ENCODE measurements at regions of chr1 and their contacts with region 1.

Region 1: DNA sequence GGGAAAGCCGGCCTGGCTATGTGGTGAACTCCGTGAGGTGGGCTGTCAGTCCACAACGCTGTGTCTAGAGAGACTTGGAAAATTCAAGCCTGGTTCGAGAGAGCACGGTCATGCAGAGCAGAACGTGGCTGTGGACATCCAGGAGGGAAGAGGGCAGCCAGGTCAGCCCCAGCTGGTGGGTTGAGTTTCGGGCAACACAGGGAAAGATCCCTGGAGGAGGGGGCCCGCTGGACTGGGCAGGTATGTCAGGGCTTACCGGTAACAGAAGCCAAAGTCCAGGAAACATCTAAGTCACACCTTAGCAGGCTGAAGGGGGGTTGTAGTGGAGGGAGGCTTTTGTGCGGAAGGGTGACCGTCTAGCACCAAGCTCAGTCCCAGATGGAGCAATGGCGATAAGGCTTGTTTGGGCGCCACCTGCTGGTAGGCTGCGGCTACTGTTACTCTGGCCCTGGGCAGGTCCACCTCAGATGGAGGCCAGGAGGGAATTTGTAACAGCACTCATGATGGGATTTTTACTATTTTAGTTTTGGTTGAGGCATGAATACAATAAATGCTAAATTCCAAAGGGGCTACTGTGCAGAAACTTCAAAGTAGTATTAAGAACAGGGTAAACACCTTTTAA is 143.3 kb upstream of the ZNF644 start:
- DNase-seq: peak; percentile 73
- ATAC-seq: peak; percentile 82
- H3K4me3 ChIP-seq: no peak overlapping the region
- H3K4me3 Mint-ChIP-seq: no peak overlapping the region
- H3K27ac ChIP-seq: no peak overlapping the region
- H3K27ac Mint-ChIP-seq: no peak overlapping the region
- H3K4me1 ChIP-seq: peaks cover 0 to 4% of the 10 kb centered on the region in 2 donors
- H3K4me1 Mint-ChIP-seq: peaks cover 2% of the 10 kb centered on the region
- H3K27me3 ChIP-seq: no peaks in the 10 kb centered on the region
- H3K27me3 Mint-ChIP-seq: peaks cover 3% of the 10 kb centered on the region
- CTCF ChIP-seq: peak; percentile 95

Region 2: DNA sequence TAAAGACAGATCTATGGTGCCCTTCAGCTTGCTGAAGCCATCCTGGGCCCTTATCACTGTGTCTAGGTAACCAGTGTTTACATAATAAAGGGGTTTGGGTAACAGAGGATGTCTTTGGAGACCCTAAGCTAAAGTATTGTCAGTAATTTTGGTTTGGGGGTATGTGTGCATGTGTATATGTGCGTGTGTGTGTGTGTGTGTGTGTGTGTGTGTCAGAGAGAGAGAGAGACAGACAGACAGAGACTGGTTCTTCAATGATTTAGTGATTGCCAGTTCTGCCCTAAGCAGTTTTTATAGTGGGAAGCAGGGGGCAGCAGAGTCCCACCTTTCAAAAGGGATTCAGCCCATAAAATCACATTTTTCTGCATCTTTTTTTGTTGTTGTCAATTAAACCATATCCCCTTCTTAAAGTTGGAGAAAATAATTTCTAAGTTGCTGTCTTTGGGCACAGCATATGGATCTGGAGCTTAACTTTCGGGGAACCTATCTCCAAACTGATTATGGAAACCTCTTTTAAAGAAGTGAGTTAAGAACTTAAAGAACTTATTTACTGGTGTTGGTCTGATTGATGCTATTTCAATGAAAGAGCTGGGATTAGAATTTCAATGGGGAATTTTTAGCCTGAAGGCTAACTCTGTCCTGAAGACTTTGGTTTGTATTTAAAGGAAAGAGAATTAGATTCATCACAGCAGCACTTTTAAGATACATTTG is 1119.1 kb before region 1 on chr1:
- CTCF ChIA-PET with region 1: interaction called, 8 read pairs
- POLR2A ChIA-PET with region 1: no interaction called
- intact Hi-C with region 1: loop called (anchors 5 kb)
- DNase-seq: peak; percentile 10
- ATAC-seq: no peak
- H3K4me3 ChIP-seq: no peak overlapping the region
- H3K4me3 Mint-ChIP-seq: no peak overlapping the region
- H3K27ac ChIP-seq: no peak overlapping the region
- H3K27ac Mint-ChIP-seq: no peak overlapping the region
- H3K4me1 ChIP-seq: no peaks in the 10 kb centered on the region
- H3K4me1 Mint-ChIP-seq: no peaks in the 10 kb centered on the region
- H3K27me3 ChIP-seq: no peaks in the 10 kb centered on the region
- H3K27me3 Mint-ChIP-seq: peaks cover 9% of the 10 kb centered on the region
- CTCF ChIP-seq: peak; percentile 66

Region 3: GRCh38 chr1:90721210-90722194 is 443.6 kb before region 1 on chr1:
- CTCF ChIA-PET with region 1: interaction called, 21 read pairs
- POLR2A ChIA-PET with region 1: no interaction called
- intact Hi-C with region 1: loop called (anchors 1 kb)
- DNase-seq: peak; percentile 67
- ATAC-seq: no peak
- H3K4me3 ChIP-seq: no peak overlapping the region
- H3K4me3 Mint-ChIP-seq: no peak overlapping the region
- H3K27ac ChIP-seq: no peak overlapping the region
- H3K27ac Mint-ChIP-seq: no peak overlapping the region
- H3K4me1 ChIP-seq: peaks cover 48 to 68% of the 10 kb centered on the region in 2 donors
- H3K4me1 Mint-ChIP-seq: peaks cover 37% of the 10 kb centered on the region
- H3K27me3 ChIP-seq: peaks cover 0 to 93% (median 82%) of the 10 kb centered on the region in 4 experiments
- H3K27me3 Mint-ChIP-seq: peaks cover 79% of the 10 kb centered on the region
- CTCF ChIP-seq: peak; percentile 77

Region 4: DNA sequence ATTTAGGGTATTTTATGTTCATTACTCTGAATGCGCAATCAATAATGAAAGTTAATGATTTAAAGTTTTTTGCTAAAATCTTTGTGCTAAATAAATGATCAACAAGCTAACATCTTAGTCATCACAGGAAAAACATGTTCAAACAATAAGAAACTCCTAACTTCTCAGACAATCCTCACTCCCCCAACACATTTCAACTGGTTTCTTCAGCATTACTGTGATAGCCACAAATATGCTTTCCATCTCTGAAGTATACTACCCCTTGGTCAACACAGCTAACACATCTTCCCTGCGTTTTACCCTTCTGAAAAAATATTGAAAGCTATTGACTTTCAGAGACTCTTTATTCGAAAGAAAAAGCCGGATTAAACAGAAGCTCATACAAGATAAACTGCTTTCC is 229.1 kb before region 1 on chr1:
- CTCF ChIA-PET with region 1: interaction called, 10 read pairs
- POLR2A ChIA-PET with region 1: no interaction called
- intact Hi-C with region 1: no loop called
- DNase-seq: no peak
- ATAC-seq: no peak
- H3K4me3 ChIP-seq: no peak overlapping the region
- H3K4me3 Mint-ChIP-seq: no peak overlapping the region
- H3K27ac ChIP-seq: no peak overlapping the region
- H3K27ac Mint-ChIP-seq: no peak overlapping the region
- H3K4me1 ChIP-seq: no peaks in the 10 kb centered on the region
- H3K4me1 Mint-ChIP-seq: peaks cover 14% of the 10 kb centered on the region
- H3K27me3 ChIP-seq: no peaks in the 10 kb centered on the region
- H3K27me3 Mint-ChIP-seq: no peaks in the 10 kb centered on the region
- CTCF ChIP-seq: no peak

Region 5: DNA sequence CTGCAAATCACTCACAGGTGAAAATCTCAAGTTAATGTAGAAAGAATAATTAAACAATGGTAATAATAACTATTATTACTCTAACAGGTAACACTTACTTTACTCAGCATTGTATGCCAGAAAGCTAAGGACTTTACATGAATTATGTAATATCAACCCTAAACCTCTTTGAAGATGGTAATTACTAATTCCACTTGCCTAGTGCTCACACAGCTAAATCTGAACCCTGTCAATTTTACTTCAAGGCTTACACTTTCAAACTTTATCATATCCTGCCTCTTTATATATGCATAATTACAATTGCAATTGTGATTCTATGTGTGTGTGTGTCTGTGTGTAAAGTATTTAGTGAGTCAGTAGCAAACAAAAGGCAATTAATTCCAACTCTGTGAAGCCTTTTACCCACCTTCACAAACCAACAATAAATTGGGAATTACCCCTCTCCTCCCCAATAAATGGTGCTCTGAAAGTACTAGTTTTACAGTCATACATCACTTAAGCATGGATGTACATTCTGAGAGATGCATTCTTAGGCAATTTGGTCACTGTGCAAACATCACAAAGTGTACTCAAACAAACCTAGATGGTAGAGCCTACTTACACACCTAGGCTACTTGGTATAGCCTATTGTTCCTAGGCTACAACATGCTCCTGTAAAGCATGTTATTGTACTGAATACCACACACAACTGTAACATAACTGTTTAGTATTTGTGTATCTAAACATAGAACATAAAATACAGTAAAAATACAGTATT is 149.2 kb before region 1 on chr1:
- CTCF ChIA-PET with region 1: interaction called, 73 read pairs
- POLR2A ChIA-PET with region 1: no interaction called
- intact Hi-C with region 1: loop called (anchors 1 kb)
- DNase-seq: no peak
- ATAC-seq: no peak
- H3K4me3 ChIP-seq: no peak overlapping the region
- H3K4me3 Mint-ChIP-seq: peak overlapping the region; percentile 44
- H3K27ac ChIP-seq: peak overlapping the region in 1 of 2 donors; percentile 47
- H3K27ac Mint-ChIP-seq: no peak overlapping the region
- H3K4me1 ChIP-seq: peaks cover 43 to 67% of the 10 kb centered on the region in 2 donors
- H3K4me1 Mint-ChIP-seq: peaks cover 80% of the 10 kb centered on the region
- H3K27me3 ChIP-seq: no peaks in the 10 kb centered on the region
- H3K27me3 Mint-ChIP-seq: no peaks in the 10 kb centered on the region
- CTCF ChIP-seq: no peak

Region 6: GRCh38 chr1:91054780-91055481 is 110.2 kb before region 1 on chr1:
- CTCF ChIA-PET with region 1: interaction called, 13 read pairs
- POLR2A ChIA-PET with region 1: no interaction called
- intact Hi-C with region 1: no loop called
- DNase-seq: peak; percentile 69
- ATAC-seq: peak; percentile 87
- H3K4me3 ChIP-seq: peak overlapping the region in 1 of 5 experiments; percentile 34
- H3K4me3 Mint-ChIP-seq: no peak overlapping the region
- H3K27ac ChIP-seq: peak overlapping the region; percentile 48 to 73
- H3K27ac Mint-ChIP-seq: no peak overlapping the region
- H3K4me1 ChIP-seq: peaks cover 50 to 62% of the 10 kb centered on the region in 2 donors
- H3K4me1 Mint-ChIP-seq: peaks cover 9% of the 10 kb centered on the region
- H3K27me3 ChIP-seq: no peaks in the 10 kb centered on the region
- H3K27me3 Mint-ChIP-seq: no peaks in the 10 kb centered on the region
- CTCF ChIP-seq: no peak

Region 7: GRCh38 chr1:91099746-91100621 is 65.2 kb before region 1 on chr1:
- CTCF ChIA-PET with region 1: no interaction called
- POLR2A ChIA-PET with region 1: no interaction called
- intact Hi-C with region 1: no loop called
- DNase-seq: no peak
- ATAC-seq: no peak
- H3K4me3 ChIP-seq: no peak overlapping the region
- H3K4me3 Mint-ChIP-seq: no peak overlapping the region
- H3K27ac ChIP-seq: no peak overlapping the region
- H3K27ac Mint-ChIP-seq: no peak overlapping the region
- H3K4me1 ChIP-seq: peaks cover 0 to 4% of the 10 kb centered on the region in 2 donors
- H3K4me1 Mint-ChIP-seq: peaks cover 5% of the 10 kb centered on the region
- H3K27me3 ChIP-seq: peaks cover 0 to 9% (median 1%) of the 10 kb centered on the region in 4 experiments
- H3K27me3 Mint-ChIP-seq: peaks cover 17% of the 10 kb centered on the region
- CTCF ChIP-seq: no peak

Region 8: GRCh38 chr1:91273875-91274274 is 108.7 kb after region 1 on chr1:
- CTCF ChIA-PET with region 1: no interaction called
- POLR2A ChIA-PET with region 1: no interaction called
- intact Hi-C with region 1: no loop called
- DNase-seq: no peak
- ATAC-seq: no peak
- H3K4me3 ChIP-seq: no peak overlapping the region
- H3K4me3 Mint-ChIP-seq: no peak overlapping the region
- H3K27ac ChIP-seq: no peak overlapping the region
- H3K27ac Mint-ChIP-seq: no peak overlapping the region
- H3K4me1 ChIP-seq: no peaks in the 10 kb centered on the region
- H3K4me1 Mint-ChIP-seq: no peaks in the 10 kb centered on the region
- H3K27me3 ChIP-seq: no peaks in the 10 kb centered on the region
- H3K27me3 Mint-ChIP-seq: peaks cover 2% of the 10 kb centered on the region
- CTCF ChIP-seq: no peak

Region 9: DNA sequence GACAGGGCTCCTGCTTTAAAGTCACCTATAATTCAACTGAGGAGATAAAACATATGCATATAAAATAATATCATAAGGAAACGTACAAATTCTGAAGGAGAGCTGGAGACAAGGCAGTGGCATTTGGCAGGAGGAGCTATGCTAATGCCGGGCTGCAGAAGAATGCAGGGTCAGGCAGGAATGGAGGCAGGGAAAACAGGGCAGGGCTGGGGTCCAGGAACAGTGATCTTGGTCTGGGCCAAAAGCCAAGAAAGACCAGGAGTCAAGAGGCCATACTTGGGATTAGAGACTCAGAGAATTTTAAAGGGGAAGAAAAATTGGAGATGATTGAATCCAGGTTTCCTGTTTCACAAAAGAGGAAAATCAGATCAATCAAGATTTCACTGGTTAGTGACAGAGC is 764.1 kb after region 1 on chr1:
- CTCF ChIA-PET with region 1: interaction called, 24 read pairs
- POLR2A ChIA-PET with region 1: no interaction called
- intact Hi-C with region 1: no loop called
- DNase-seq: no peak
- ATAC-seq: no peak
- H3K4me3 ChIP-seq: no peak overlapping the region
- H3K4me3 Mint-ChIP-seq: no peak overlapping the region
- H3K27ac ChIP-seq: no peak overlapping the region
- H3K27ac Mint-ChIP-seq: no peak overlapping the region
- H3K4me1 ChIP-seq: no peaks in the 10 kb centered on the region
- H3K4me1 Mint-ChIP-seq: no peaks in the 10 kb centered on the region
- H3K27me3 ChIP-seq: no peaks in the 10 kb centered on the region
- H3K27me3 Mint-ChIP-seq: no peaks in the 10 kb centered on the region
- CTCF ChIP-seq: no peak